ENCODE measurements at regions of chr3 and their contacts with region 1.

Region 1: GRCh38 chr3:135965506-135966270 is at the start of gene PPP2R3A:
- DNase-seq: peak; percentile 47 to 93
- H3K4me3 ChIP-seq: peak within 1 kb of the TSS; percentile 76 to 92
- H3K27ac ChIP-seq: peak within 1 kb of the TSS; percentile 94 to 95
- H3K4me1 ChIP-seq: peaks cover 0 to 16% of the 10 kb centered on the region in 2 donors
- H3K27me3 ChIP-seq: no peaks in the 10 kb centered on the region
- CTCF ChIP-seq: no peak
- total RNA-seq, gene PPP2R3A: 10.5 TPM

Region 2: GRCh38 chr3:134485718-134486576 is 1479.7 kb before region 1 on chr3 and contains the starts of genes ANAPC13 and CEP63:
- intact Hi-C with region 1: loop called (anchors 10 kb)
- DNase-seq: peak; percentile 80 to 98
- H3K4me3 ChIP-seq: peak within 1 kb of the TSS; percentile 78 to 92
- H3K27ac ChIP-seq: peak within 1 kb of the TSS; percentile 95 to 98
- H3K4me1 ChIP-seq: peaks cover 26 to 38% of the 10 kb centered on the region in 2 donors
- H3K27me3 ChIP-seq: no peaks in the 10 kb centered on the region
- CTCF ChIP-seq: no peak
- total RNA-seq, gene ANAPC13: 17.0 TPM
- total RNA-seq, gene CEP63: 5.3 TPM

Region 3: DNA sequence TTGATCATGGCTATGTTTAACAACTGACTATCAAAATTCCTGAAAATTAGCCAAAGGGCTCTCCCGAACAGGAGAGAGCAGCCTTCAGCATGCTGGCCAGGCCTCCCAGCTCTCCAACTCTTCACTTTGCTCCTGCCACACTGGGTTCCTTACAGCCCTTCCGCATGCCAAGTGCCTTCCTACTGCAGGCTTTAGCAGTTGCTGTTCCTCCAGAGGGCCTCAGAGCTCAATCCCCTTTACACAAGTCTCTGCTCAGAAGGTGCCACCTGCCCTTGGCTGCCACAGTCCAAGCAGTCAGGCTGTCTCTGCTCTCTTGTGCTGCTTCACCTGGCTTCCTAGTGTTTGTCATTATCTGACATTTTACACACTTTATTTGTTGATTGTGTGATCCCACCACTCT is 553.2 kb before region 1 on chr3:
- intact Hi-C with region 1: no loop called
- DNase-seq: no peak
- H3K4me3 ChIP-seq: no peak overlapping the region
- H3K27ac ChIP-seq: no peak overlapping the region
- H3K4me1 ChIP-seq: no peaks in the 10 kb centered on the region
- H3K27me3 ChIP-seq: no peaks in the 10 kb centered on the region
- CTCF ChIP-seq: no peak

Region 4: GRCh38 chr3:135950941-135951340 is 14.7 kb before region 1 on chr3:
- intact Hi-C with region 1: no loop called
- DNase-seq: no peak
- H3K4me3 ChIP-seq: no peak overlapping the region
- H3K27ac ChIP-seq: no peak overlapping the region
- H3K4me1 ChIP-seq: no peaks in the 10 kb centered on the region
- H3K27me3 ChIP-seq: no peaks in the 10 kb centered on the region
- CTCF ChIP-seq: no peak

Region 5: DNA sequence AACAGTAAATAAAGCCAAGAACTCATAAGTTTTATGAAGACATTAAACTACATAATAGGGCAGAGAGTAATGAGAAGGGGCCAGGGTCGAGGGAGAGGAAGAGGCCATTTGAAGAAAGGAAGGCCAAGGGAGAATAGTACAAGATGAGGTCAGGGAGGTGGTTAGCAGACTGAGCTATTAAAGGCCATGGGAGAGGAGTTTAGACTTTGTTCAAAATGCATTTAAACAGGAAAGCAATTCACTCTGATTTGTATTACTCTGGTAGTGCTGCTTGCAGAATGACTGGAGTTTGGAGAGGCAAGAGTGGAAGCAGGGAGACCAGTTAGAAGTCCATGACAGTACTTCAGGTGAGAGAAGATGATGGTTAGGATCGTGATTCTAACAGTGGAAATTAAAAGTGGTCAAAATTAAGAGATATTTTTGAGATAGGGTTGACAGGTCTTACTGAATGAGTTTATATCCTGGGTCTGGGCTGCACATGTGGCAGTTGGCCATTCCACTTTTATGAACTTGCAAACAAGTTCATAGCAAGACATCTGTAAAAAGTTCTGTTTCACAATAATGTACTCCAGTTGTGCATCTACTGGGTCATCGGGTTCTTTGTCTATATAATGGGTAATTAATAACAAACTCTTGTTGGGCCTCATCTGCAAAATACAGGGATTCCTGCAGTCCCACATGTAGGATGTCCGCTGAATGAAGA is 16.2 kb after region 1 on chr3:
- intact Hi-C with region 1: no loop called
- DNase-seq: no peak
- H3K4me3 ChIP-seq: no peak overlapping the region
- H3K27ac ChIP-seq: no peak overlapping the region
- H3K4me1 ChIP-seq: no peaks in the 10 kb centered on the region
- H3K27me3 ChIP-seq: no peaks in the 10 kb centered on the region
- CTCF ChIP-seq: no peak

Region 6: GRCh38 chr3:135992072-135992471 is 26.4 kb after region 1 on chr3:
- intact Hi-C with region 1: loop called (anchors 1 kb)
- DNase-seq: peak in 1 of 2 donors; percentile 66
- H3K4me3 ChIP-seq: no peak overlapping the region
- H3K27ac ChIP-seq: peak overlapping the region; percentile 62 to 84
- H3K4me1 ChIP-seq: peaks cover 4 to 17% of the 10 kb centered on the region in 2 donors
- H3K27me3 ChIP-seq: no peaks in the 10 kb centered on the region
- CTCF ChIP-seq: no peak

Region 7: GRCh38 chr3:136042608-136043221 is 77.0 kb after region 1 on chr3:
- intact Hi-C with region 1: loop called (anchors 5 kb)
- DNase-seq: no peak
- H3K4me3 ChIP-seq: no peak overlapping the region
- H3K27ac ChIP-seq: no peak overlapping the region
- H3K4me1 ChIP-seq: no peaks in the 10 kb centered on the region
- H3K27me3 ChIP-seq: no peaks in the 10 kb centered on the region
- CTCF ChIP-seq: peak in 2 of 3 experiments; percentile 11 to 71

Region 8: GRCh38 chr3:136142592-136142991 is 176.9 kb after region 1 on chr3:
- intact Hi-C with region 1: no loop called
- DNase-seq: no peak
- H3K4me3 ChIP-seq: no peak overlapping the region
- H3K27ac ChIP-seq: peak overlapping the region; percentile 57 to 59
- H3K4me1 ChIP-seq: peaks cover 0 to 8% of the 10 kb centered on the region in 2 donors
- H3K27me3 ChIP-seq: no peaks in the 10 kb centered on the region
- CTCF ChIP-seq: no peak

Region 9: GRCh38 chr3:136250226-136250902 is 284.7 kb after region 1 on chr3 and contains the start of gene PCCB:
- intact Hi-C with region 1: loop called (anchors 1 kb)
- DNase-seq: peak; percentile 65 to 96
- H3K4me3 ChIP-seq: peak within 1 kb of the TSS; percentile 60 to 81
- H3K27ac ChIP-seq: peak within 1 kb of the TSS; percentile 80 to 90
- H3K4me1 ChIP-seq: peaks cover 0 to 3% of the 10 kb centered on the region in 2 donors
- H3K27me3 ChIP-seq: no peaks in the 10 kb centered on the region
- CTCF ChIP-seq: peak; percentile 81 to 92 (median 85)
- total RNA-seq, gene PCCB: 114 TPM